RWPE1 (cell line): ENCODE measurements at regions of chr1 and their contacts with region 1.

Region 1: GRCh38 chr1:31984419-31985347 is 29.0 kb upstream of the KHDRBS1 start:
- DNase-seq: no peak
- H3K27ac ChIP-seq: no peak overlapping the region
- CTCF ChIP-seq: no peak

Region 2: DNA sequence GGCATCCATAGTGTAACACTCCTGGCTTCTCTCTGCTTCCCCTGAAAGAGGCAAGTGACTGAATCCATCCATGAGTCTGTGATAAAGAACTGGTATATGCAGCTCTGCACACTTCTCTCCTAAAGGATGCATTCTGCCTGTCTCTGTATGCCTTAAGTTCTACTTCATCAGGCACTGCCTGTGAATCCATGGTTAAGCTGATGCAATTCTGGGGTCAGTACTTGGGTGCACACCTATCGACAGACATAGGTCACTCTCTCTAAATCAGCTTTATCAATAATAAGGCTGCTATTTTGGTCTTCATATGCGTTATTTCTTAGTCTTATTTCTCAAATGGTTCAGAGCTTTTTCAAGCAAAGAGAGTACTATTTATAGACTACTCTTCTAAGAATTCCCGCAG is 13.8 kb before region 1 on chr1:
- CTCF ChIA-PET with region 1: no interaction called
- POLR2A ChIA-PET with region 1: no interaction called
- DNase-seq: no peak
- H3K27ac ChIP-seq: no peak overlapping the region
- CTCF ChIP-seq: no peak

Region 3: DNA sequence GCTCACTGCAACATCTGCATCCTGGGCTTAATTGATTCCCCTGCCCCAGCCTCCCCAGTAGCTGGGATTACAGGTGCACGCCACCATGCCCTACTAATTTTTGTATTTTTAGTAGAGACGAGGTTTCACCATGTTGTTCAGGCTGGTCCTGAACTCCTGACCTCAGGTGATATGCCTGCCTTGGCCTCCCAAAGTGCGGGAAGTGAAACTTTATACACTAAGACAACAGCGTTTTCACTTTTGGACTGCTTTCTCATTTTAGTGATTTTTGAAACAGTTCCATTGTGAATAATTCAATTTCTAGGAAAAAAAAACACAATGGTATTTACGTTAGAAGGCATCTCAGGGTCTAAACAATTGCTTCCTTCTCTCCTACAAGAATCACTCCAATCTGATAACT is 17.2 kb after region 1 on chr1:
- CTCF ChIA-PET with region 1: interaction called, 10 read pairs
- POLR2A ChIA-PET with region 1: no interaction called
- DNase-seq: no peak
- H3K27ac ChIP-seq: no peak overlapping the region
- CTCF ChIP-seq: no peak

Region 4: GRCh38 chr1:32063261-32063681 is 78.6 kb after region 1 on chr1:
- CTCF ChIA-PET with region 1: interaction called, 11 read pairs
- POLR2A ChIA-PET with region 1: no interaction called
- DNase-seq: peak; percentile 55
- H3K27ac ChIP-seq: peak overlapping the region; percentile 72
- CTCF ChIP-seq: peak; percentile 63